ENCODE measurements at regions of chr6 and their contacts with region 1.

Region 1: GRCh38 chr6:18323935-18324705 is 59.8 kb upstream of the DEK start:
- DNase-seq: no peak
- H3K4me3 ChIP-seq: no peak overlapping the region
- H3K27ac ChIP-seq: no peak overlapping the region
- H3K4me1 ChIP-seq: peaks cover 0 to 9% (median 0%) of the 10 kb centered on the region in 4 donors
- H3K27me3 ChIP-seq: no peaks in the 10 kb centered on the region
- CTCF ChIP-seq: peak; percentile 71 to 77 (median 73)
- EP300 ChIP-seq: no peak
- POLR2A ChIP-seq: no peak

Region 2: DNA sequence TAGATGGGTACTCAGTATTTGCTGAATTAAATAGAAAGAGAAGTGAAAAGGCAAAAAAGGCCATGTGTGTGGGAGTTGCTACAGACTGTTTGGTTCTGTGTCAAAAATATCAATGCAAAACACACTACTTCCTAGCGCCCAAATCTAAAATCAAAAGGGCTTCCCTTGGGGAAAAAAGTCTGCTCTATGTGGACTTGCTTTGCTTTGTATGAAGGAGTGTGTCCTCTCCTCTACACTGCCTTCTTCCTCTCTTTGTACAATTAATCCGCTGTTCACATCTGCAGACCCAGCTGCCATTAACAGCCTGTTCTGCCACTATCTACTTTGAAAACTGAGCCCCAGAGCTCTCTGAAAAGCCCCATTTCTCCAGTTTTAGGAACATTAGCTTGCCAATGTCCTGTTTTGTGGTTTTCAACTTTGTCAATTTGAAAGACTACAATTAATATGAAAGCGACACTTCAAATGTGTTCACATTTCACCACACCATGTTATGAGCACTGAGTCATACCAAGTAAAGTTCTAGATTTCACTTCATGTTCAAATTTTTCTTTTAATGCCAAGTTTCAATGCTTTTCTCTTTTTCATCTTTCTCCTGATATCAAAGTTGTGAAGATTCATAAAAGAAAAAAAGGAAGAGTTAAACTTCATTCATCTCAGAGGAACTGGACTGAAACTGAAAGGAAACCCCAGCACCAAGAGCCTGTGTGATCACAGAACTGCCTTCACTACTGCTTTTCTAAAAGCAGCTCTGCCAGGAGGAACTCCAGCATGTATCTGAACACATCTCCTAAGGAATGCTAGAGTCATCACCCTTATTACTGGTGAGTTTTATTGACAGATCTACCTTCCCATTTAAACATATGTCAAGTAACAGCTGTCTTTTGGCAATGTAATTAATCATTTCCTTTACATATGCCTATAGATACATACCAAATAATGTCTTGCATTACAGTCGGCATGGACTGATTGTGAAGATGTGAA is 439.3 kb before region 1 on chr6:
- in situ Hi-C with region 1: no loop called
- intact Hi-C with region 1: no loop called
- DNase-seq: no peak
- H3K4me3 ChIP-seq: no peak overlapping the region
- H3K27ac ChIP-seq: no peak overlapping the region
- H3K4me1 ChIP-seq: peaks cover 0 to 10% (median 3%) of the 10 kb centered on the region in 4 donors
- H3K27me3 ChIP-seq: no peaks in the 10 kb centered on the region
- CTCF ChIP-seq: no peak
- EP300 ChIP-seq: no peak
- POLR2A ChIP-seq: no peak

Region 3: GRCh38 chr6:18496462-18496861 is 172.3 kb after region 1 on chr6:
- in situ Hi-C with region 1: loop called in 2 of 4 experiments (anchors 5 to 10 kb)
- intact Hi-C with region 1: no loop called
- DNase-seq: no peak
- H3K4me3 ChIP-seq: no peak overlapping the region
- H3K27ac ChIP-seq: no peak overlapping the region
- H3K4me1 ChIP-seq: no peaks in the 10 kb centered on the region
- H3K27me3 ChIP-seq: no peaks in the 10 kb centered on the region
- CTCF ChIP-seq: no peak
- EP300 ChIP-seq: no peak
- POLR2A ChIP-seq: no peak

Region 4: GRCh38 chr6:19312241-19312978 is 988.3 kb after region 1 on chr6:
- in situ Hi-C with region 1: no loop called
- intact Hi-C with region 1: no loop called
- DNase-seq: no peak
- H3K4me3 ChIP-seq: no peak overlapping the region
- H3K27ac ChIP-seq: no peak overlapping the region
- H3K4me1 ChIP-seq: no peaks in the 10 kb centered on the region
- H3K27me3 ChIP-seq: no peaks in the 10 kb centered on the region
- CTCF ChIP-seq: no peak
- EP300 ChIP-seq: no peak
- POLR2A ChIP-seq: no peak